Left ventricle myocardium inferior (tissue), 1 donor: ENCODE measurements at regions of chr2 and their contacts with region 1.

Region 1: GRCh38 chr2:171159372-171160118 is 1.1 kb downstream of the TLK1 start:
- DNase-seq: peak; percentile 40
- H3K4me3 ChIP-seq: peak overlapping the region; percentile 83
- H3K27ac ChIP-seq: peak overlapping the region; percentile 96
- H3K4me1 ChIP-seq: peaks cover 49% of the 10 kb centered on the region
- H3K27me3 ChIP-seq: no peaks in the 10 kb centered on the region
- CTCF ChIP-seq: peak; percentile 50

Region 2: DNA sequence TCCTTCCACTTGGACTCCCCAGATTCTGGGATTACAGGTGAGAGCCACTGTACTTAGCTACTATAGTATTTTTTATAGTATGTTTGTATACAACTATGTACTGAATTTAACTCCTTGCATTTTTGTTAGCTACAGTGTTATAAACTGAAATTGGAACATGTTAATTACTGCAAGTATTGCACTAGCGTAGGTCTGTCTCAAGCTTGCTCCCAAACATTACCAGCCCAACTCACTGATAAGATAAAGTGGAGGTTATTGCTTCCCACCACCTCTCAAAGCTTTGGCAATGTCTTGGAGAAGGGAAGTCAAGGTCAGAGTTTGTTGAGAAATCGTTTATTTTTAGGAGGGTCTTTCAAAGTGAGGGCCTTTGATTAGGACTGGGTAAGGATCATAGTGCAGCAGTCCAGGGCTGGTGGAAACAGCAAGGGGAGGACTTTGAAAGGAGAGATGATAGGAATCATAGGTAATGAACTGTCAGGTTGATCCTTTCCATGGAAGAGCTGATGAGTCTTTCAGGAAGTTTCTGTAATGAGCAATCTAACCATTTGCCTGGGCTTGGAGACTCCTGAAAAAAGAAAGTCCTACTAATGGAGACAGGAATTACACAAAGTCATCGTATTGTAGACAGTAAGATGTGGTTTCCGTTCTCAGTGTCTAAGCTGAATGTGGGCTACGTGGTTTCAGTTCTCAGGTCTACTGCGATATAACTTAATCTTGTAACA is 724.5 kb before region 1 on chr2:
- intact Hi-C with region 1: no loop called
- DNase-seq: no peak
- H3K4me3 ChIP-seq: no peak overlapping the region
- H3K27ac ChIP-seq: no peak overlapping the region
- H3K4me1 ChIP-seq: no peaks in the 10 kb centered on the region
- H3K27me3 ChIP-seq: peaks cover 26% of the 10 kb centered on the region
- CTCF ChIP-seq: no peak

Region 3: GRCh38 chr2:170973492-170974303 is 185.8 kb before region 1 on chr2:
- intact Hi-C with region 1: loop called (anchors 10 kb)
- DNase-seq: peak; percentile 85
- H3K4me3 ChIP-seq: peak overlapping the region; percentile 77
- H3K27ac ChIP-seq: peak overlapping the region; percentile 86
- H3K4me1 ChIP-seq: peaks cover 7% of the 10 kb centered on the region
- H3K27me3 ChIP-seq: no peaks in the 10 kb centered on the region
- CTCF ChIP-seq: peak; percentile 97

Region 4: GRCh38 chr2:171579481-171579880 is 419.9 kb after region 1 on chr2:
- intact Hi-C with region 1: no loop called
- DNase-seq: no peak
- H3K4me3 ChIP-seq: no peak overlapping the region
- H3K27ac ChIP-seq: no peak overlapping the region
- H3K4me1 ChIP-seq: no peaks in the 10 kb centered on the region
- H3K27me3 ChIP-seq: peaks cover 5% of the 10 kb centered on the region
- CTCF ChIP-seq: no peak